ENCODE measurements at regions of chr6 and their contacts with region 1.

Region 1: GRCh38 chr6:165439928-165440554 is 130.6 kb upstream of the C6orf118 start:
- DNase-seq: peak; percentile 34
- ATAC-seq: no peak
- H3K4me3 ChIP-seq: no peak overlapping the region
- H3K27ac ChIP-seq: no peak overlapping the region
- H3K4me1 ChIP-seq: no peaks in the 10 kb centered on the region
- H3K27me3 ChIP-seq: no peaks in the 10 kb centered on the region
- CTCF ChIP-seq: peak; percentile 32 to 64 (median 49); a peak in 5 of 6 replicates
- POLR2A ChIP-seq: no peak
- RAD21 ChIP-seq: peak; percentile 65

Region 2: DNA sequence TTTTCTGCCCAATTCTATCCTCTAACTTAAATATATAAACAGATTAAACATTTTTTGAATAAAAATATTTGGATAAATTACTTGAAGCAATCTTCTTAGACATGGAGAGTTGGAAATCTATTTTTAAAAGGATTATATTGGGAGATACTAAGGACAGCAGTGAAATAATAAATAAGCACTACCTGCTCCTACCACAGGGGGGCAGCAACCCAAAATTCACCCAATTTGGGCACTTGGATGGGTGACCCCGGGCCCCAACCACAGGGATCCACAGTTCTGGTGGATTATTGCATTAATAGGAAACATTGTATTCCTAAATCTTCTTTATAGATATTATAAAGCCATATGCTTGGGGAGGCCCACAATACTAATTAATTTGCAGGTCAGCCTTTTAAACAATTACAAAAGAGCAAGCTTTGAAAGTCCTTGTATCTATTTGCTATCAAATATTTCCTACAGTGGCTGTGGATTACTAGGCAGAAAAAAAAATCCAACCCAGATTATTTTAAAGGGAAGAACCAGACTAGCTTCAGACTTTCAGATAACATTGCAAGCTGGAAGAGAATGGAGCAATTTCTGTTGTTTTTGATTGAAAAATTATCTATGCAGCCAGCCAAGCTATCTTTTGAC is 289.4 kb after region 1 on chr6:
- CTCF ChIA-PET with region 1: interaction called, 14 read pairs
- POLR2A ChIA-PET with region 1: no interaction called
- RAD21 ChIA-PET with region 1: no interaction called
- intact Hi-C with region 1: loop called (anchors 5 kb)
- DNase-seq: peak; percentile 6
- ATAC-seq: peak; percentile 67
- H3K4me3 ChIP-seq: no peak overlapping the region
- H3K27ac ChIP-seq: no peak overlapping the region
- H3K4me1 ChIP-seq: no peaks in the 10 kb centered on the region
- H3K27me3 ChIP-seq: no peaks in the 10 kb centered on the region
- CTCF ChIP-seq: peak; percentile 24 to 66 (median 55); a peak in 5 of 6 replicates
- POLR2A ChIP-seq: no peak
- RAD21 ChIP-seq: peak; percentile 39; the same call in 1 of the 2 replicates

Region 3: GRCh38 chr6:165850434-165851019 is 410.5 kb after region 1 on chr6:
- CTCF ChIA-PET with region 1: interaction called, 42 read pairs
- POLR2A ChIA-PET with region 1: no interaction called
- RAD21 ChIA-PET with region 1: interaction called, 5 to 6 read pairs
- intact Hi-C with region 1: loop called (anchors 1 kb)
- DNase-seq: peak; percentile 12
- ATAC-seq: peak; percentile 86
- H3K4me3 ChIP-seq: no peak overlapping the region
- H3K27ac ChIP-seq: no peak overlapping the region
- H3K4me1 ChIP-seq: no peaks in the 10 kb centered on the region
- H3K27me3 ChIP-seq: no peaks in the 10 kb centered on the region
- CTCF ChIP-seq: peak; percentile 59 to 93 (median 87)
- POLR2A ChIP-seq: no peak
- RAD21 ChIP-seq: peak; percentile 71

Region 4: GRCh38 chr6:166097915-166098522 is 658.0 kb after region 1 on chr6:
- CTCF ChIA-PET with region 1: interaction called, 3 read pairs
- POLR2A ChIA-PET with region 1: no interaction called
- RAD21 ChIA-PET with region 1: interaction called in 1 of 2 experiments, 3 read pairs
- intact Hi-C with region 1: loop called (anchors 2 kb)
- DNase-seq: peak; percentile 49
- ATAC-seq: peak; percentile 97
- H3K4me3 ChIP-seq: peak overlapping the region; percentile 29 to 54
- H3K27ac ChIP-seq: no peak overlapping the region
- H3K4me1 ChIP-seq: peaks cover 0 to 6% of the 10 kb centered on the region in 2 experiments; a peak in 1 of 4 replicates
- H3K27me3 ChIP-seq: no peaks in the 10 kb centered on the region
- CTCF ChIP-seq: peak; percentile 64 to 97 (median 89)
- POLR2A ChIP-seq: no peak
- RAD21 ChIP-seq: peak; percentile 66

Region 5: GRCh38 chr6:166106076-166106686 is 666.1 kb after region 1 on chr6:
- CTCF ChIA-PET with region 1: interaction called, 6 read pairs
- POLR2A ChIA-PET with region 1: no interaction called
- RAD21 ChIA-PET with region 1: no interaction called
- intact Hi-C with region 1: loop called (anchors 1 kb)
- DNase-seq: peak; percentile 49
- ATAC-seq: peak; percentile 92
- H3K4me3 ChIP-seq: no peak overlapping the region
- H3K27ac ChIP-seq: no peak overlapping the region
- H3K4me1 ChIP-seq: no peaks in the 10 kb centered on the region
- H3K27me3 ChIP-seq: no peaks in the 10 kb centered on the region
- CTCF ChIP-seq: peak; percentile 78 to 96 (median 83)
- POLR2A ChIP-seq: no peak
- RAD21 ChIP-seq: peak; percentile 95